GM12878 (cell line): ENCODE measurements at regions of chr2 and their contacts with region 1.

Region 1: GRCh38 chr2:122583159-122583917 is 827.9 kb downstream of the TSN start:
- DNase-seq: no peak
- ATAC-seq: no peak
- H3K4me3 ChIP-seq: no peak overlapping the region
- H3K27ac ChIP-seq: no peak overlapping the region
- H3K4me1 ChIP-seq: no peaks in the 10 kb centered on the region
- H3K27me3 ChIP-seq: no peaks in the 10 kb centered on the region
- CTCF ChIP-seq: no peak
- EP300 ChIP-seq: no peak
- POLR2A ChIP-seq: no peak
- RAD21 ChIP-seq: no peak

Region 2: DNA sequence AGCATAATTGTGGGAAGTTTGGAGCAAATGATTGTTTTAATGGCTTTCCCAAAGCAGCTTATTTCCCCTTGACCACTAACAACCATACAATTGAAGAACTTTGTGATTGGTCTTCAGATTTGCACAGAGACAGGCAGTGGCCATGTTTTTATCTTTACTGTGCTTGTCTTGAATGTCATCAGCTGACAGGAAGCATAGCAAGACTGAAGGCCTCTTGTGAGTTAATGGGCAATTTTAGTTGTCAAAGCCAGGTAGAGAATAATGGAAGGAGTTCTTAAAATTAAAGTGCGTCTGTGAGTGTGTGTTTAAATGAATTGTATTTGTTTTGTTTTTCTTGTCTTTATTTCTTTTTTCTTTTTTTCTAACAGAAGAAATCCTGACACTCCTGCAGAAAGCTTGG is 18.0 kb before region 1 on chr2:
- CTCF ChIA-PET with region 1: interaction called, 3 read pairs
- POLR2A ChIA-PET with region 1: no interaction called
- RAD21 ChIA-PET with region 1: no interaction called
- SMC1A ChIA-PET with region 1: interaction called, 12 read pairs
- in situ Hi-C with region 1: no loop called
- intact Hi-C with region 1: no loop called
- DNase-seq: no peak
- ATAC-seq: no peak
- H3K4me3 ChIP-seq: no peak overlapping the region
- H3K27ac ChIP-seq: no peak overlapping the region
- H3K4me1 ChIP-seq: no peaks in the 10 kb centered on the region
- H3K27me3 ChIP-seq: no peaks in the 10 kb centered on the region
- CTCF ChIP-seq: no peak
- EP300 ChIP-seq: no peak
- POLR2A ChIP-seq: no peak
- RAD21 ChIP-seq: no peak

Region 3: DNA sequence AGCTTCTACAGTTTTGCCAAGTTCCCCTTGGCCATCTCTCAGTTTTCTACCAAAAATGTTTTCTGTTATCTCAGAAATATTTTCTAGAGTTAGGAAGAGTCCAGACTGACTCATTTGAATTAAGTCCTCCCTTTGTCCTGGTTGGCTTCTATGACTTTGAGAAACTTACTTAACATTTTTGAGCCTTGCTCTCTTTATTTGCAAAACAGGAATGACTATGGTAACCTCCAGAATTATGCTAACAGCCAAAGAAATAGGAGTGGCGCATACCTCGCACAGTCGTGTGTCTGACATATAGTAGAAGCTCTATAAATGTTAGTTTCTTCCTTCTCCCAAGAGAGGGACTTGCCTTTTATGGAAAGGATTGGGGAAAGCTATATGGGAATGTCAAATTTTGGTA is 13.3 kb after region 1 on chr2:
- CTCF ChIA-PET with region 1: interaction called, 3 read pairs
- POLR2A ChIA-PET with region 1: no interaction called
- RAD21 ChIA-PET with region 1: interaction called, 3 read pairs
- SMC1A ChIA-PET with region 1: interaction called, 14 read pairs
- in situ Hi-C with region 1: no loop called
- intact Hi-C with region 1: no loop called
- DNase-seq: no peak
- ATAC-seq: no peak
- H3K4me3 ChIP-seq: no peak overlapping the region
- H3K27ac ChIP-seq: no peak overlapping the region
- H3K4me1 ChIP-seq: no peaks in the 10 kb centered on the region
- H3K27me3 ChIP-seq: no peaks in the 10 kb centered on the region
- CTCF ChIP-seq: no peak
- EP300 ChIP-seq: no peak
- POLR2A ChIP-seq: no peak
- RAD21 ChIP-seq: no peak

Region 4: GRCh38 chr2:123546353-123546752 is 963.0 kb after region 1 on chr2:
- CTCF ChIA-PET with region 1: no interaction called
- POLR2A ChIA-PET with region 1: no interaction called
- RAD21 ChIA-PET with region 1: no interaction called
- SMC1A ChIA-PET with region 1: no interaction called
- in situ Hi-C with region 1: no loop called
- intact Hi-C with region 1: no loop called
- DNase-seq: no peak
- ATAC-seq: no peak
- H3K4me3 ChIP-seq: no peak overlapping the region
- H3K27ac ChIP-seq: no peak overlapping the region
- H3K4me1 ChIP-seq: no peaks in the 10 kb centered on the region
- H3K27me3 ChIP-seq: no peaks in the 10 kb centered on the region
- CTCF ChIP-seq: no peak
- EP300 ChIP-seq: no peak
- POLR2A ChIP-seq: no peak
- RAD21 ChIP-seq: no peak